ENCODE measurements at regions of chr2 and their contacts with region 1.

Region 1: DNA sequence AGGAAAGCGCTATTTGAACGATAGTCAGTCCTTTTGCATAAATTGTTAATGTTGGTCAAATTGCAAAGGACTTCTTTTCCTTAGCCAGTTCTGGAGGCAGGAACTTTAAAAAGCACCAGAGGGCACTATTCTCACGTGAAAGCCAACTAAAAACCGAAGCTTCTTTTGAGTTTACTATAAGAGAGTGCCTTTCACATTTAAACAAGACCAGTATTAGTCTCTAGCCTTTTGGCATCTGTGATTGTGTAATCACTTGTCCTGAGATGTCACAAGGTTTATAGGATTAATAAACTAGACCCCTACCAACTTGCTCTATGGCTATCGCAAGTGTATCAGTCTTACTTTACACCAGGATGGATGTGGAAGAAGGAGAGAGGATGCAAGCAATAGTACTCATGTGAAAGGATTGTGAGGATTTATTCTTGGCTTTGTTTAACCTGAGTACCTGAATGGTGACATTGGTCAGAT is 14.4 kb upstream of the STAT4 start:
- DNase-seq: peak; percentile 77
- H3K4me3 Mint-ChIP-seq: no peak overlapping the region
- H3K27ac Mint-ChIP-seq: no peak overlapping the region
- H3K4me1 Mint-ChIP-seq: peaks cover 21% of the 10 kb centered on the region
- H3K27me3 Mint-ChIP-seq: peaks cover 9% of the 10 kb centered on the region

Region 2: GRCh38 chr2:191245046-191245868 is 80.0 kb after region 1 on chr2 and contains the start of gene MYO1B:
- intact Hi-C with region 1: loop called (anchors 2 kb)
- DNase-seq: peak; percentile 88
- H3K4me3 Mint-ChIP-seq: peak within 1 kb of the TSS; percentile 88
- H3K27ac Mint-ChIP-seq: peak within 1 kb of the TSS; percentile 77
- H3K4me1 Mint-ChIP-seq: peaks cover 17% of the 10 kb centered on the region
- H3K27me3 Mint-ChIP-seq: peaks cover 21% of the 10 kb centered on the region
- total RNA-seq, gene MYO1B: 16.4 and 21.1 TPM in 2 replicates

Region 3: DNA sequence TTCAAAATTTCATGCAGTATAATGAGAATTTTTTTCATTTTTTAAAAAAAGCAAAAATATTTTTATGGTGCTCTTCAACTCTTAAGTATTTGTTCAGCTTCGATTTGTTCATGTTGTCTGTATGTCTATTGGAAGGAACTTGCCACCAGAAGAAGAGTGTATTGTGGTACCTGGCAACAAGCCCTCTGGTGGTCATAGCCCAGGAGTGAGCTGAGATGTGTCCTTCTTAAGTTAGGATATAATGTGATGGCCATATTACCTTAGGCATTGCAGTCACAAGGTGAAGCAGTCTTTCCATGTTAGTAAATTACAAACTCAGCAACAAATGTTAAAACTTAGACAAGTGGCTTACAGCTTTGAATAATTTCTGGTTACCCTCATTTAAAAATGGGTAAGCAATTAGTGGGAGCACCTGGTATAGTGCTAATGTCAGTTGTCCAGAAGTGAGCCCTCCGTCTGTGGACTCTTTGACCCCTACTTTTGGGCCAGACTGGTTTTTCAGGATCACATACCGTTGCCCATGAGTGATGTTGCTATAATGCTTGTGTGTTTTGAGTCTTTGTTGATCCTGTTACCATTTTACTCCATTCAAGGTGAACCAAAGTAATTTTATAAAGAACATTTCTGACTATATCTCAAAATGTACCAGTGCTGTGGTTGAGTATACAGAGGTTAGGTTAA is 137.4 kb after region 1 on chr2:
- intact Hi-C with region 1: loop called (anchors 1 kb)
- DNase-seq: peak; percentile 68
- H3K4me3 Mint-ChIP-seq: no peak overlapping the region
- H3K27ac Mint-ChIP-seq: no peak overlapping the region
- H3K4me1 Mint-ChIP-seq: no peaks in the 10 kb centered on the region
- H3K27me3 Mint-ChIP-seq: no peaks in the 10 kb centered on the region

Region 4: GRCh38 chr2:191369036-191369435 is 203.8 kb after region 1 on chr2:
- intact Hi-C with region 1: loop called (anchors 5 kb)
- DNase-seq: no peak
- H3K4me3 Mint-ChIP-seq: no peak overlapping the region
- H3K27ac Mint-ChIP-seq: no peak overlapping the region
- H3K4me1 Mint-ChIP-seq: no peaks in the 10 kb centered on the region
- H3K27me3 Mint-ChIP-seq: no peaks in the 10 kb centered on the region

Region 5: GRCh38 chr2:191501561-191502168 is 336.5 kb after region 1 on chr2:
- intact Hi-C with region 1: loop called (anchors 1 kb)
- DNase-seq: no peak
- H3K4me3 Mint-ChIP-seq: no peak overlapping the region
- H3K27ac Mint-ChIP-seq: no peak overlapping the region
- H3K4me1 Mint-ChIP-seq: no peaks in the 10 kb centered on the region
- H3K27me3 Mint-ChIP-seq: peaks cover 12% of the 10 kb centered on the region

Region 6: DNA sequence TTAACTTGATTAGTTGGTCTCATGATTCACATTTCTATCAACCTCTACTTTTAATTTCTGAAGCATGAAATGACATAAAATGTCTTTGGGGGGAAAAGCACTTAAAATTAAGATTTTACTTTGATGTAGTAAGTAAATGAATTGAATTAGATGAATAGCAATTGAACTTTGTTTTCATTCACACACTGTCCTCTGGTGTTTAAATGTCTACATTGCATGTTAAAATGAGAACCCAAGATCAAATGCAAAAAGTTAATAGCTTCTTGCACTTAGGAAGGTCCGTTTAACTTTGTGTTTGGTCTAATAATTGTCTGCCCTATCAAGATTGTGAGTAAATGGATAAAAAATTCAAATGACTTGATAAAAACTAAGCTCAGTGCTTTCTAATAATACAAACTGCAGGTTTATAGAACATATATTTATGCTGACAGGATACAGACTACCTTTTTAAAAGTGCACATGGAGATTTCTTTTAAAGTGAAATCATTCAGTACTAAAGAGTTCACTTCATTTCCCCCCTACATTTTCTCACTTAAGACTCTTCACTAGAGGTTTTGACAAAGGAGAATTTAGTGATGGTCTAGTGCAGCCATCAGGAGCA is 356.5 kb after region 1 on chr2:
- intact Hi-C with region 1: loop called (anchors 1 kb)
- DNase-seq: no peak
- H3K4me3 Mint-ChIP-seq: no peak overlapping the region
- H3K27ac Mint-ChIP-seq: no peak overlapping the region
- H3K4me1 Mint-ChIP-seq: no peaks in the 10 kb centered on the region
- H3K27me3 Mint-ChIP-seq: peaks cover 16% of the 10 kb centered on the region

Region 7: DNA sequence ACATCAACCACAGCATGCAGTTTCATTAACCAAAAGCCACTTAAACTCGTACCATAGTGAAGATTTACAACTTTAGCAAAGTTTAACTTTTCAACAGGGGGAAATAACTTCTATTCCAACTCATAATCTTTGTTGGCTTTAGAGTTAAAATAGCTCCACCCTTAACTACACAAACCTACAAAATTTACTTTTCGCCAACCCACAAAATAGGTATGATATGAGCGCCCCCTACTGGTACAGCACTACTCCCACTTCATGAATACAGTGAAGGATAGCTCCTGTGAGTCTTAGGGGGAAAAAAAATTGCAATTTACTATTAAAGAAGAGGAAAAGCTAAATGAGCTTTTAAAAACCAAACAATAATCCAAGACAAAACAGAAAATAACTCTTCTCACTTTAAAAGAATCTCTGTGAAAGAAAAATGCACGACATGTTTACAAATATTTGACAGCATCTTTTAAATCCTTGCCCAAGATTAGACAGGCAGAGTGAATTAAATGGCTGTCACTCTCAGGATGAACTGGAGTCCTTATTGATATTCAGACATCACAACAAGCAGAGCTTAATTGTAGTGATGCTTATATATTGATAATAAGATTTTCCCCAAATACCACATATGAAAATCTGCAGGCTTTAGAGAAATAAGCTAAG is 997.3 kb after region 1 on chr2:
- intact Hi-C with region 1: loop called (anchors 1 kb)
- DNase-seq: peak; percentile 90
- H3K4me3 Mint-ChIP-seq: no peak overlapping the region
- H3K27ac Mint-ChIP-seq: no peak overlapping the region
- H3K4me1 Mint-ChIP-seq: peaks cover 5% of the 10 kb centered on the region
- H3K27me3 Mint-ChIP-seq: peaks cover 21% of the 10 kb centered on the region